OCI-LY7 (cell line): ENCODE measurements at regions of chr12 and their contacts with region 1.

Region 1: DNA sequence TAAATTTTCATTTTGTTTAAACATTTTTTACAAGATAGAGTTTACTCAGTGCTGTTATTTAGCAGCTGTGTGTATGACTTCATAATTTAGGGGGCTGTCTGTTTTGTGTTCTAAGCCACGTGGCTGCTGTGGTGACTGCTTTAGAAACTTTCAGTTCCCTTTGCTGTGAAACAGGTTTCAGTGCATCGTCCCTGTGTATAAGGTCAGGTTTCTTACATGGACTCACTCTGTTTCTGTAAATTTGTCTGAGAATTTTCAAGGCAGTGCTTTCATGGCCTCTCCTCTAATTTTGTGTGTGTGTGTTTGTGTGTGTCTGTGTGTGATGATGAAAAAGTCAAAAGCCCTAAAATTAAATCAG is 32.4 kb downstream of the BICD1 start:
- DNase-seq: peak; percentile 94
- H3K4me3 ChIP-seq: peak overlapping the region; percentile 63
- H3K27ac ChIP-seq: peak overlapping the region; percentile 98
- H3K4me1 ChIP-seq: peaks cover 87% of the 10 kb centered on the region
- CTCF ChIP-seq: no peak

Region 2: DNA sequence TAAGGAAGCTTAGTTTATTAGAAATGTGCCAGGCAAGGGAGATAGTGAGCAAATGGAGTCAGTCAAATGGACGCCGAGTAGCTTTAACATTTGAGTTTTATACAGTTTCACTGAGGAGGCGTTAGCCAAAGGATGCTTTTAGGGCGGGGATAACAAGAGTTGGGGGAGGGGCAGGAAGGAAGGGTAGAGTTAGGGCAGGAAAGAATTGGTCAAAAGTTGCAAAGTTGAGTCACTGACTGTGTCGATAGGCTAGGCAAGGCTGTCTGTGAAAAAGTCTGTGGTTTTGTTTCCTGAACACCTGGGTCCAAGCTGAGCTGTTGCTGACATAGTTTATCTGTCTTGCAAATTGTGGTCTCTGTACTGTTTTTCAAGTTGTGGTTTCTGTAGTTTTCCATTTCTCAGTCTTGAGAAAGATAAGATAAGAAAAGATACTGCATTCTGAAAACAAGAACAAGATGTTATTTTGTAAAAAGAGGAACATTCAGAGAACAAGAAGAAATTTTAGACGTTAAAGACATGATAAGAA is 242.5 kb before region 1 on chr12:
- CTCF ChIA-PET with region 1: no interaction called
- POLR2A ChIA-PET with region 1: interaction called, 4 read pairs
- intact Hi-C with region 1: loop called (anchors 10 kb)
- DNase-seq: peak; percentile 100
- H3K4me3 ChIP-seq: peak overlapping the region; percentile 54
- H3K27ac ChIP-seq: peak overlapping the region; percentile 96
- H3K4me1 ChIP-seq: peaks cover 37% of the 10 kb centered on the region
- CTCF ChIP-seq: no peak

Region 3: GRCh38 chr12:32062881-32063280 is 76.2 kb before region 1 on chr12:
- CTCF ChIA-PET with region 1: no interaction called
- POLR2A ChIA-PET with region 1: no interaction called
- intact Hi-C with region 1: loop called (anchors 2 kb)
- DNase-seq: peak; percentile 48
- H3K4me3 ChIP-seq: no peak overlapping the region
- H3K27ac ChIP-seq: peak overlapping the region; percentile 15
- H3K4me1 ChIP-seq: peaks cover 24% of the 10 kb centered on the region
- CTCF ChIP-seq: peak; percentile 20; the same call in 1 of the 2 replicates

Region 4: DNA sequence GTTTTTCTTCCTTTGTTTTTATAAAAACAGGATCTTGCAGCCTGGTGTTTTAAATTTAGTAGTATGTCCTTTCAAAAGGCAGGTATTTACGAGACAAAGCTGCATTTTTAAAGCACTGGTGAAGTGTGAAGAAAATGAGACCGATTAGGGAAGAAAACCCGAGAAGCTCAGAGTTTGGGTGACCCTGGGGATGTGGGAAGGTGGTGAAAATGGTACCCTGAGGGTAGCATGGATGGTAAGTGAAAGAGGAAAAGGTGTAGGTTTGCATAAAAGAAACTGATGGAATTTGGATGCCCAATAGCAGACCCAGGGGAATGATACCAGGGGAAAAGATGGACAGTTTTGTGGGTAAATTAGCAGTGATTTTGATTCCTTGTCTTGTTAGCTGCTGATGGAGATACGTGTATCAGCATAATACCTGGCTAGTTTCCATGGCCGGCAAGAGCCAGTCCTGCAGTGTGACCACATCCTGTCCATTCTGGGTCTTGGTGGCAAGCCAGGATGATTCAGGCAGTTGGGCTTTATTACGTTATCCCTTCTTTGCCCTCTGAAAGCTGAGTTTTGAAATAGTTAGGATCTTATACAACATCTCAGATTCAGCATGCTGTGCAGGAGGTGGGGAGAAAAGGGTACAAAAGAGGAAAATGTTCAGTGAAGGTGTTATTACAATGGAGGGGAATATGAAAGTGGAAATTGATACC is 23.5 kb before region 1 on chr12:
- CTCF ChIA-PET with region 1: interaction called, 3 read pairs
- POLR2A ChIA-PET with region 1: interaction called, 16 read pairs
- intact Hi-C with region 1: loop called (anchors 2 kb)
- DNase-seq: peak; percentile 35
- H3K4me3 ChIP-seq: peak overlapping the region; percentile 25
- H3K27ac ChIP-seq: peak overlapping the region; percentile 20
- H3K4me1 ChIP-seq: peaks cover 56% of the 10 kb centered on the region
- CTCF ChIP-seq: no peak

Region 5: DNA sequence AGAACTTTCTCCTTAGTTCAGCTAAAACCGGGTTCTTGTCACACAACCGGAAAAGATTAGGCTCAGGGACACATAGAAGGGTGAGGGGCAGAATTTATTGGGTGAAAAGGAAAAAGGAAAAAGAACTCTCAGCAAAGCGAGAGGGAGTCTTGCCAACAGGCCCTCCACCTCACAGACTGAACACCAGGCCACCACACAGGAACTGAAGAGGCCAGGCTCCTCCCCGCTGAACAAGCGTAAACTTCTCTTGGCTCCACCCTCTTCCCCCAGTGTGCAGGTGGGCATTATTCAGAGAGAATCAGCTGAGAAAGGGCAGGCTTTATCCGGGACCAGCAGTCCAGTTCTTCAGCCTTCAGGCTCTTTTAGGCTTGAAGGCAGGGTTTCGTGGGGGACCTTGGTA is 134.7 kb after region 1 on chr12:
- CTCF ChIA-PET with region 1: no interaction called
- POLR2A ChIA-PET with region 1: interaction called, 12 read pairs
- intact Hi-C with region 1: loop called (anchors 2 kb)
- DNase-seq: peak; percentile 92
- H3K4me3 ChIP-seq: peak overlapping the region; percentile 50
- H3K27ac ChIP-seq: peak overlapping the region; percentile 97
- H3K4me1 ChIP-seq: peaks cover 65% of the 10 kb centered on the region
- CTCF ChIP-seq: no peak

Region 6: DNA sequence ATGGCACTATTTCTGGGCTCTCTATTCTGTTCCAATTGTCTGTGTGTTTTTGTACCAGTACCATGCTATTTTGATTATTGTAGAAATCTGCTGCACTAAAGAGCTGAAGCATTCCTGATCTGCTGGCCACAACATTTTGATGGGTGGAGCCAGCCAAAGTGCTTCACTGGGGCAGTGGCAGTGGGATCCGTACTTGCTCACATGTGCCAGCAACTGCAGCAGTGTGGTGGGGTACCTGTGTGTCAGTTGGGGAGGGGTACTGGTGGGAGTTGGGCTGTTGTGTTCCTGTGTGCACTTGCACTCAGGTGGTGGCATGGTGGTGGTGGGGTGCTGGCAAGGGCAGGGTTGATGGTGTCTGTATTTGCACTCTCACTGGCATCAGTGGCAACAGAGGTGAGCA is 1678.7 kb after region 1 on chr12:
- CTCF ChIA-PET with region 1: no interaction called
- POLR2A ChIA-PET with region 1: no interaction called
- intact Hi-C with region 1: no loop called
- DNase-seq: no peak
- H3K4me3 ChIP-seq: no peak overlapping the region
- H3K27ac ChIP-seq: no peak overlapping the region
- H3K4me1 ChIP-seq: no peaks in the 10 kb centered on the region
- CTCF ChIP-seq: no peak